Tibial artery (tissue), 4 donors: ENCODE measurements at regions of chr3 and their contacts with region 1.

Region 1: DNA sequence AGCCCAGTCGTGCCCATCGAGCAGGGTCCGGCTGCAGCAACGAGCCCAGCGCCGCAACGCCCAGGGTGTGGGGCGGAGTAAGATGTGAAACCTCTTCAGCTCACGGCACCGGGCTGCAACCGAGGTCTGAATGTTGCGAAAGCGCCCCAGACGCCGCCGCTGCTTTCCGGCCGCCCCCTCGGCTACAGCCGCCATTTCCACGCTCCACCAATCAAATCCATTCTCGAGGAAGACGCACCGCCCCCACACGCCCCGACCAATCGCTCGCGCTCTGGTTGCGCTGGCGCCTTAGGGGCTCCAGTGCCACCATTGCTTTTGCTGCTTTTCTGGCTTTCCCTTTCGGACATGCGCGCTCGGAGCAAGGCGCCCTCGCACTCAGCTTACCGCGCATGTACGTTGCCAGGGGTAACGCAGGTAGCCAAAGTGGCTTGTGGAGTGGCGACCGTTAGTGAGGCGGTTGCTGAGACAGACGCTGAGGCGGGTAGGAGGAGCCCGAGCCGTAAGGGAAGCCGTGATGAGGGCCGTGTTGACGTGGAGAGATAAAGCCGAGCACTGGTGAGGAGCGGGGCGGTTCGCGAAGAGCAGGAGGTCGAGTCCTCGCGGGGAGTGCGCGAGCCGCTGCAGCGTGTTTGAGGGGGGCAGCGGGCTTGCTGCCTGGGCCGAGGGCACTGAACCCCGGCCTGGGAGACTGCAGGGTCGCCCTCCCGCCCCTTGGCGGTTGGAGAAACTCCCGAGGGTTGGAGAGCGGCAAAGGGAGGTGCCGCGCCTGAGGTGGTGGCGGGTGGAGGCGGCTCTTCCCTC is at the starts of genes IFT122 and MBD4:
- DNase-seq: peak; percentile 98 to 99
- H3K4me3 ChIP-seq: peak within 1 kb of the TSS; percentile 72 to 85
- H3K27ac ChIP-seq: peak within 1 kb of the TSS; percentile 79 to 82
- H3K4me1 ChIP-seq: peaks cover 3 to 71% (median 45%) of the 10 kb centered on the region in 4 donors
- H3K27me3 ChIP-seq: no peaks in the 10 kb centered on the region
- CTCF ChIP-seq: peak in 1 of 2 experiments; percentile 10

Region 2: DNA sequence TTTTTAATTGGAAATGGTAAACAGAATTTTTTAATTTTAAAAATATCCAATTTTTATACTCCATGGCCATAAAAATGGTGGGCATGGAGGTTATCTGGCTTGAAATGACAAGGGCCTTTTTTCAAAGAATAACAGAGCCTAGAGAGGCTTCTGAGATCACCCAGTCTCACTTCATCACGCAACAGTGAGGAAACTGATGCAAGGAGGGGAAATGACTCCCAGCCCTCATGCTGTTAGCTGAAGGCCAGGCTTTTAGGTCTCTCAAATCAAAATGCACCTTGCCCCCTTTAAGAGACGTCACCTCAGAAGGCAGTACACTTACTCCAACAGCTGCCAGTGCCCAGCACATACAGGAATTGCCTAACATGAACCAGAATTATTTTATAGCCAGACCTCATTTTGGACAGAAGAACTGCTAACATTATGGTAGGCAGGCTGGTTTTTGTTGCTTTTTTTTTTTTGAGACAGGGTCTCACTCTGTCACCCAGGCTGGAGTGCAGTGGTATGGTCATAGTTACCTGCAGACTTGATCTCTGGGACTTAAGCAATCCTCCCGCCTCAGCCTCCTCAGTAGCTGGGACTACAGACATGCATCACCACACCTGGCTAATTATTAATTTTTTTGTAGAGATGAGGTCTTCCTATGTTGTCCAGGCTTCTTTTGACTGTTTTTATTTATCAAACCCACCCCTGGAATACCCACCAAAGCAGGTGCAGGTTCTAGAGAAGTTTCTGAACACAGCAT is 327.5 kb before region 1 on chr3:
- intact Hi-C with region 1: no loop called
- DNase-seq: no peak
- H3K4me3 ChIP-seq: no peak overlapping the region
- H3K27ac ChIP-seq: no peak overlapping the region
- H3K4me1 ChIP-seq: peaks cover 0 to 4% (median 0%) of the 10 kb centered on the region in 4 donors
- H3K27me3 ChIP-seq: no peaks in the 10 kb centered on the region
- CTCF ChIP-seq: no peak

Region 3: GRCh38 chr3:129336093-129336709 is 103.8 kb before region 1 on chr3:
- intact Hi-C with region 1: no loop called
- DNase-seq: no peak
- H3K4me3 ChIP-seq: no peak overlapping the region
- H3K27ac ChIP-seq: no peak overlapping the region
- H3K4me1 ChIP-seq: no peaks in the 10 kb centered on the region
- H3K27me3 ChIP-seq: no peaks in the 10 kb centered on the region
- CTCF ChIP-seq: no peak

Region 4: DNA sequence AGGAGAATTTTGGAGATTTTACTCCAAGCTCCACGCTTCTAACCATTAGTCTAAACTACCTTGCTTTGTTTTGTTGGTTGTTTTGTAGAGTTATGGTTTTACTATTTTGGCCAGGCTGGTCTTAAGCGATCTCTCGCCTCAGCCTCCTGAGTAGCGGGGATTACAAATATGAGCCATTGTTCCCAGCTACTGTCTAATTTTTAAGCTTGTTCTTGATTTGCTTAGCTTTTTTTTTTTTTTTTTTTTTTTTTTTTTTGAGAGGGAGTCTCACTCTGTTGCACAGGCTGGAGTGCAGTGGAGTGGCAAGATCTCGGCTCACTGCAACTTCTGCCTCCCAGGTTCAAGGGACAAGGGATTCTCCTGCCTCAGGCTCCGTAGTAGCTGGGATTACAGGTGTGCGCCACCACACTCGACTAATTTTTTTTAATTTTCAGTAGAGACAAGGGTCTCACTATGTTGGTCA is 40.1 kb before region 1 on chr3:
- intact Hi-C with region 1: loop called (anchors 5 kb)
- DNase-seq: no peak
- H3K4me3 ChIP-seq: peak overlapping the region; percentile 82 to 86
- H3K27ac ChIP-seq: peak overlapping the region; percentile 80 to 89
- H3K4me1 ChIP-seq: peaks cover 0 to 17% (median 9%) of the 10 kb centered on the region in 4 donors
- H3K27me3 ChIP-seq: no peaks in the 10 kb centered on the region
- CTCF ChIP-seq: no peak

Region 5: GRCh38 chr3:130111185-130111864 is 671.3 kb after region 1 on chr3:
- intact Hi-C with region 1: loop called (anchors 10 kb)
- DNase-seq: peak; percentile 99 to 100
- H3K4me3 ChIP-seq: peak overlapping the region; percentile 67 to 69
- H3K27ac ChIP-seq: peak overlapping the region; percentile 89 to 94
- H3K4me1 ChIP-seq: peaks cover 0 to 15% (median 4%) of the 10 kb centered on the region in 4 donors
- H3K27me3 ChIP-seq: no peaks in the 10 kb centered on the region
- CTCF ChIP-seq: no peak